Common myeloid progenitor, CD34-positive (primary cell): ENCODE measurements at regions of chr11 and their contacts with region 1.

Region 1: DNA sequence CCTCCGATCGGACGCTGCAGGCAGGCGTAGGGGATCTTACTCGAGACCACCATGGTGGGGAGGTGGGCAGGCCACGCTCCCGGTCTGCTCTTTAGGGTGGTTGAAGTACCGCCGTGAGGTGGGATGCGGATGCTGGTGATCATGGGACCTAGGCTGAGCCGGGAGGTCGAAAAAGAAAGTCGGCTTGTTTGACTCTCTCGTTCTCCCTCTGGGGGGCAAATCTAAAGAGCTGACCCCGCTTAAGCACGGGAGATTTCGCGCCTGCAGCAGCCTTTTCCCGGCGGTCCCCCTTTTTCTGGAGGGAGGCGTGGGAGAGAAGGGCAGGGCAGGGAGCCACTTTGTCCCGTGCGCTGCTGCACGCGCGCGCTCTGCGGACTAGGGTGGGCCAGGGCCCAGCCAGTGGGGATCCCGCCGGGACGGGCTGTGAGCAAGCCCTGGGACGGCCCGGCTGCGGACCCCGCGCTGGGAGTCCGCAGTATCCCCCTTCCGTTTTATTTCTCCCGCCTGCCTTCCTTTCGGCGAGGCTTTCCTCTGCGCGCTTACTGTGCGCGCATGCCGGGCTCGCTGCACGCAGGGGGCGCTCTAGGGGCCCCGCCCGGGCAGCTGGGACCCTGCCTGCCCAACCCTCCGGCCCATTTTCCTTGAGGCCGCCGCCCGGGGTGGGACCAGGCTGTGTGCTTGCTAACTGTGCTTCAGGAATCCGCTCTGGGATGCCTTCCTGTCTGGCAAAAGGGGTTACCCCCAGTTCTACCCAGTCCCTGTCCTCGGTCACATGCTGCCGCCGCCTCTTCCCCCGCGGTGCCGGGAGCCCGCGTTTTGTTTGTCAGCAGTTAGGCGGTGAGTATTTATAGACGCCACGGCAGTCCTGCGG is 81.0 kb downstream of the PRR5L start:
- DNase-seq: peak; percentile 61 to 89 (median 82)
- H3K4me3 ChIP-seq: peak overlapping the region; percentile 82 to 98 (median 93)
- H3K27ac ChIP-seq: peak overlapping the region; percentile 15 to 49
- H3K4me1 ChIP-seq: peaks cover 18 to 78% (median 43%) of the 10 kb centered on the region in 4 experiments
- H3K27me3 ChIP-seq: no peaks in the 10 kb centered on the region

Region 2: DNA sequence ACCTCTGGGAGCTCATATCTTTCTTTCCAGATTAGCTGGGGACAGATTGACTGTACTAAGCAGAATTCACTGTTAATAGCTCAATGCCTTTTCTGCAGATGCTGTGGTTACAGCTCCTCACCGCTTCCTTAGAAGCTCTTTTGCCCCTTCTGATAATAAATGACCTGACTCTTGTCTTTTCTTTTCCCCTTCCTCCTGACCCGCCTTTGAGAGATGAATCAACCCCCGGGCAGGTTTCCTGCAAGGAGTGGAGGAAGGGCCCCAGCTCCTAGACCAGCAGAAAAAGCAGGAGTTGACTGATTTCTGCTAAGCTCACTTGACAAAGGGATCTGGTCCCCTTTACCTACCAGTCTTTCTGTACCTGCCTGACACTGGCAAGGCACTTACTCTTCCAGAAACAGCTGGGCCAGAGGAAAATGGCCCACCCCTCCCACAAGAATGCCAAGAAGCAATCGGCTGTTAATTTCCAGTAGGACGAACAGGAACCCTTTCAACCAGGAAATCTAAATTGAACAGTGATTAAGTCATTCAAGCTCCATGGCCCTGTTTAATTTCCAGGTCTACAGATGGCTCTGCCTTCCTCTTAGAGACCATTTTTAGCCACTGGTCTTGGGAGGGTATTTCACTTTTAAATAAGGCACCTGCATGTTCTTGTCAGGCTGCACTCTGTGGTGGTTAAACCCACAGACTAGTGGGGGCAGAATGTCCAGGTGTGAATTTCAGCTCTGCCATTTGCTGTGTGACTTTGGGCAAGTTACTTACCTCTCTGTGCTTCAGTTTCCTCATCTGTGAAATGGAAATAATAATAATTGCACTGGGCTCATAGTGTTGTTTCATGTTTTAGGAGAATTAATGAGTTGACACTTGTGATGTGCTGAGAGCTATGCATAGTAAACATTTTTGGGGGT is 13.5 kb before region 1 on chr11:
- CTCF ChIA-PET with region 1: interaction called, 38 read pairs
- POLR2A ChIA-PET with region 1: interaction called, 5 read pairs
- DNase-seq: peak in 2 of 3 donors; percentile 77 to 87
- H3K4me3 ChIP-seq: no peak overlapping the region
- H3K27ac ChIP-seq: no peak overlapping the region
- H3K4me1 ChIP-seq: peaks cover 19 to 73% (median 57%) of the 10 kb centered on the region in 4 experiments
- H3K27me3 ChIP-seq: no peaks in the 10 kb centered on the region

Region 3: DNA sequence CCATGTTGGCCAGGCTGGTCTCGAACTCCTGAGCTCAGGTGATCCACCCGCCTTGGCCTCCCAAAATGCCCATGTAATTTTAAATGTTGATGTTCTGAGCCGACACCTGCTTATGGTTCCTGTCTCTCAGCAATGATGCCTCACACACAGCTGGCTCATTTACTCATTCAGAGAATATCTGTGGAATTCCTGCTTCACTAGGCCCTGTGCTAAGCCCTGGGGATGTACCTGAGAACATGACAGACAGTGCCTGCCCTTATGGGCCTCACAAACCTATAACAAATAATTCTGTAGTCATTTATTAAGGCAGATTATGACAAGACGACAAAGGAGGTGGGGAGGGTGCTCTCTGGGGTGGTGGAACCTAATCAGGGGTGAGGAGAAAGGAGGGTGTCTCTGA is 12.7 kb after region 1 on chr11:
- CTCF ChIA-PET with region 1: interaction called, 81 read pairs
- POLR2A ChIA-PET with region 1: interaction called, 3 read pairs
- DNase-seq: no peak
- H3K4me3 ChIP-seq: no peak overlapping the region
- H3K27ac ChIP-seq: no peak overlapping the region
- H3K4me1 ChIP-seq: peaks cover 11 to 69% (median 38%) of the 10 kb centered on the region in 4 experiments
- H3K27me3 ChIP-seq: no peaks in the 10 kb centered on the region

Region 4: DNA sequence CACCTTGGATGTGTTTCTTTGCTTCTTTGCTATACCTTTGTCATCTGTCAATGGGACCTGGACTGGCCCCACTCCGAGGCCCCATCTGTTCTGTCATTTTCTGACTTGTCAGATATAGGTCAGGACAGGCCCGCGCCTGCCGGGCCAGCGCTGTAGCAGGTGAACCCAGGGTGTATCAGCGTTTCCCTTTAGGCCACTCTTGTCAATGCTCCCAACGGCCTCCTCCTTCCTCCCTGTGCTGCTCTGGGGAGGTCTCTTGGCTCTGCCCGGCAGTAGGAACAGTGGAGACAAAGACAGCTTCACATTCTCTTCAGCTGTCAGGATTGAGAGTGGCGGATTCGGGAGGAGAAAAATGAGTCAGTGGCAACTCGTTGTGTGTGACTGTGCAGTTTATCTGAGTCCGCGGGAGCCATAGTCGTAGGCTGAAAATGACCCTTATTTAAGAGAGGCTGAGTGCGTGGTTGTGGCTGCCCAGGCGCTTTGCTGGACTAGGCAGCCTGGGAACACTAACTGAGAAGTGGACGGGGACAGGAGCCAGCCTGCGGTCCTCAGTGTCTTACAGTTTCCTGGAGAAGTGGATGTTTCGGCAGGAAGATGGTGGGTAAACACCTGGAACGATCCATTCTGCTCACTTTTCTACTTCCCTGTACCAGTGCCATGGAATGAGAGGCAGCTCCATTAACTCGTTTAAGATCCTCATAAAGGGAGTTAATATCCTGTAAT is 21.3 kb after region 1 on chr11:
- CTCF ChIA-PET with region 1: interaction called, 81 read pairs
- POLR2A ChIA-PET with region 1: interaction called, 3 read pairs
- DNase-seq: no peak
- H3K4me3 ChIP-seq: no peak overlapping the region
- H3K27ac ChIP-seq: peak overlapping the region in 1 of 2 experiments; percentile 29
- H3K4me1 ChIP-seq: peaks cover 12 to 66% (median 59%) of the 10 kb centered on the region in 4 experiments
- H3K27me3 ChIP-seq: no peaks in the 10 kb centered on the region

Region 5: GRCh38 chr11:36411202-36411640 is 34.1 kb after region 1 on chr11:
- CTCF ChIA-PET with region 1: interaction called, 15 read pairs
- POLR2A ChIA-PET with region 1: interaction called, 12 read pairs
- DNase-seq: peak; percentile 73 to 97 (median 96)
- H3K4me3 ChIP-seq: peak overlapping the region in 3 of 7 experiments; percentile 19 to 53 (median 43)
- H3K27ac ChIP-seq: peak overlapping the region; percentile 67 to 76
- H3K4me1 ChIP-seq: peaks cover 49 to 84% (median 74%) of the 10 kb centered on the region in 4 experiments
- H3K27me3 ChIP-seq: no peaks in the 10 kb centered on the region

Region 6: GRCh38 chr11:36419791-36420424 is 42.8 kb after region 1 on chr11:
- CTCF ChIA-PET with region 1: interaction called, 14 read pairs
- POLR2A ChIA-PET with region 1: interaction called, 4 read pairs
- DNase-seq: no peak
- H3K4me3 ChIP-seq: no peak overlapping the region
- H3K27ac ChIP-seq: no peak overlapping the region
- H3K4me1 ChIP-seq: peaks cover 32 to 72% (median 54%) of the 10 kb centered on the region in 4 experiments
- H3K27me3 ChIP-seq: no peaks in the 10 kb centered on the region

Region 7: DNA sequence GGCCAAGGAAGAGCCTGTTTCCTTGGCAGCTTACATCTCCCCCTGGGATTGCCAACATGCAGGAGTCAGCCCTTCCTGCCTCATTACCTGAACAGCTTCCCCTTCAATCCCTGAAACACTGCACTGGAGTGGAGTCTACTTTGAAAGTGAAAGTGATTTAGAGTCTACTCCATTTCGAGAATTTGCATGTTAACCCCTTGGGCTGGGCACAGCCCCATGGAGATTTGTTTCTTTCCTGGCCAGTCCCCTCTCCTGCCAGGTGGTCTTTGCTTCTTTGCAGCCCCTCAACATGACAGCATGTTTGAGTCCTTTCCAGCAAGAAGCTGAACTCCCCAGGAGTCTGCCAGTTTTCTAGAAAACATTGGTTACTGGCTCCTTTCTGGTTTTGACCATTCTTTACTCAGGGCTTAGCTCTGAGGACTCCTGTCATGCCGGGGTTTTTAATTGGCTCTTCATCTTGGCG is 73.0 kb after region 1 on chr11:
- CTCF ChIA-PET with region 1: interaction called, 13 read pairs
- POLR2A ChIA-PET with region 1: interaction called, 5 read pairs
- DNase-seq: peak; percentile 21 to 57 (median 48)
- H3K4me3 ChIP-seq: peak overlapping the region in 6 of 7 experiments; percentile 12 to 74 (median 38)
- H3K27ac ChIP-seq: peak overlapping the region; percentile 0 to 27
- H3K4me1 ChIP-seq: peaks cover 28 to 64% (median 61%) of the 10 kb centered on the region in 4 experiments
- H3K27me3 ChIP-seq: no peaks in the 10 kb centered on the region